Gastrocnemius medialis (tissue), 4 donors: ENCODE measurements at regions of chr14 and their contacts with region 1.

Region 1: DNA sequence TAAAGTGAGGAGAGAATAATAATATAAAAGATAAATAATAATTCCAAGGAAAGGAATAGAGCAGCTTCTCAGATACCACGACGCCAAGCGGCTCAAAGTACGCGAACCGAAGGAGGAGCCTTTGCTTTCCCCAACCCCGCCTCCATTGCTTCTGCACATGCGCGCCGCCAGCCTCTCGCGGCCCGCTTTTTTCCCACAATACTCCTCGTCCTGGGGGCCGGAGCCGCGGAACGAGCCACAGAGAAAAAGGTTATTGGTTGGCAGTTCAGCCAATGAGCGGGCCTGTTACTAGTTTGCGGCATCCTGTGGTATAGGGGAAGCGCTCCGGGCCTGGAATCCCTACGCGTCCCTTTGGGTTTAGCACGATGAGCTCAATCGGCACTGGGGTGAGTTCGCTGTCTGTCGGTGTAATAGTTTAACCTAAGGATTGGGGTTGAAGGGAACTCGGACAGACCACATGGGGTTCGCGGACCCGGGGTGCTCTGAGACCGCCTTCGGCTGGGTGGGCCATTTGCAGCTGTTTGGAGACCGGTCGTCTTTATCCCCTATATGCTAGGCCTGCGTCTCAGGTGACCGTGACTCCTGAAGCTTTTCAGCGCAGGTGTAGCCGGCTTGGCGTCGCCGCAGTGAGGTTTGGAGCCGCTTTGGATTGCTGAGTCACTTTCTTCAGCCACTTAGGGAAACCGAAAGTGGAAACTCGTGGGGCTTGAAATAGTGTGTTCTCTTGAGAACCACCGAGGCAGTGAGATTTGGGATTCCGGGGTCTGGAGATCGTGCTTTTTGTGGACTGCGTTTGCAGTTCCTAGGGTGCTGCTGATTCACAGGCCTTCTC is at the start of gene PSMA3:
- DNase-seq: peak; percentile 98
- ATAC-seq: peak; percentile 92 to 96
- H3K4me3 ChIP-seq: peak within 1 kb of the TSS; percentile 70 to 95 (median 78)
- H3K27ac ChIP-seq: peak within 1 kb of the TSS; percentile 94 to 99 (median 96)
- H3K4me1 ChIP-seq: peaks cover 27 to 33% of the 10 kb centered on the region in 2 donors
- H3K27me3 ChIP-seq: no peaks in the 10 kb centered on the region
- CTCF ChIP-seq: peak in 1 of 5 experiments; percentile 2
- POLR2A ChIP-seq: peak; percentile 89 to 92
- total RNA-seq, gene PSMA3: 200 to 301 (median 217) TPM

Region 2: DNA sequence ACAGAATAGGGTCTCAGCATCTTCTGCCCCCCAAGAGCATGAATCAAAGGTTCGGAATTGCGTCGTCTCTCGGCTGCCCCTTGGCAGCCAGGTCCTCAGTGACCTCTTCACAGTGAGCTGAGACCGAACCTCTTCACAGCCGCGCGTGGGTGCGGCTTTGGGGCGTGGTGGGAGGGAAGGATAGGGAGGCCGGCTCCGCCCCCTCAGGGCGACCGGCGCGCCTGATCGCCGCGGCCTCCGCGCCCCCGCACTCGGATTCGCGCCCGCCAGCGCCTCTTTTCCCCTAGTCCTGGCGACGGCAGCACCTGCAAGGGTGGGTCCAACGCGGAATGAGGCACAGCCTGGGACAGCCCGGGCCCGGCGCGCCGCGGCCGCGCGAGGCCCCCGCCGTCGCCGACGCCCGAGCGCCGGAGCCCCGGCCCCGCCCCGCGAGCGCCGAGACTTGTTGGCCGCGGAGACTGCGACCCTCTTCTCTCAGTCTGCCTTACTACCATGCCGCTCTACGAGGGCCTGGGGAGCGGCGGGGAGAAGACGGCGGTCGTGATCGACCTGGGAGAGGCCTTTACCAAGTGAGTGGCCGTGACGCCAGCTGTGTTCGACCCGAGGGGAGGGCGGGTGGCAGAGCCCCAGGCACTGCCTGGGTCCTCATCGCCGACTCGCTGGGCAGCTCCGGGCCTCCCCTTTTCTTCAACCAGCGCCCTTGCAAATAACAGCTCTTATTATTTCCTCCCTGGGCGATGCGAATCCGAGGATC is 44.9 kb before region 1 on chr14 and contains the start of gene ACTR10:
- in situ Hi-C with region 1: no loop called
- intact Hi-C with region 1: loop called (anchors 2 kb)
- DNase-seq: peak; percentile 68 to 83
- ATAC-seq: peak; percentile 96
- H3K4me3 ChIP-seq: peak within 1 kb of the TSS; percentile 87 to 94 (median 90)
- H3K27ac ChIP-seq: peak within 1 kb of the TSS; percentile 92 to 94 (median 93)
- H3K4me1 ChIP-seq: peaks cover 4 to 14% of the 10 kb centered on the region in 2 donors
- H3K27me3 ChIP-seq: no peaks in the 10 kb centered on the region
- CTCF ChIP-seq: peak in 1 of 5 experiments; percentile 15
- POLR2A ChIP-seq: peak; percentile 41 to 54
- total RNA-seq, gene ACTR10: 70.6 to 104 (median 88.8) TPM

Region 3: GRCh38 chr14:58216544-58216943 is 28.2 kb before region 1 on chr14:
- in situ Hi-C with region 1: no loop called
- intact Hi-C with region 1: no loop called
- DNase-seq: no peak
- ATAC-seq: no peak
- H3K4me3 ChIP-seq: no peak overlapping the region
- H3K27ac ChIP-seq: no peak overlapping the region
- H3K4me1 ChIP-seq: no peaks in the 10 kb centered on the region
- H3K27me3 ChIP-seq: no peaks in the 10 kb centered on the region
- CTCF ChIP-seq: no peak
- POLR2A ChIP-seq: no peak

Region 4: GRCh38 chr14:58427281-58428117 is 182.7 kb after region 1 on chr14 and contains the starts of genes KIAA0586 and TIMM9:
- in situ Hi-C with region 1: no loop called
- intact Hi-C with region 1: loop called (anchors 2 kb)
- DNase-seq: peak; percentile 95 to 97
- ATAC-seq: peak; percentile 99
- H3K4me3 ChIP-seq: peak within 1 kb of the TSS; percentile 62 to 98 (median 84)
- H3K27ac ChIP-seq: peak within 1 kb of the TSS; percentile 87 to 97 (median 91)
- H3K4me1 ChIP-seq: peaks cover 27 to 34% of the 10 kb centered on the region in 2 donors
- H3K27me3 ChIP-seq: no peaks in the 10 kb centered on the region
- CTCF ChIP-seq: peak in 2 of 5 experiments; percentile 25 to 32
- POLR2A ChIP-seq: peak; percentile 77 to 90
- total RNA-seq, gene KIAA0586: 10.0 to 13.9 (median 11.9) TPM
- total RNA-seq, gene TIMM9: 46.2 to 110 (median 86.8) TPM